A549 (cell line): ENCODE measurements at regions of chr10 and their contacts with region 1.

Region 1: GRCh38 chr10:87861953-87862678 is 1.2 kb downstream of the KLLN start:
- DNase-seq: peak; percentile 91 to 99
- ATAC-seq: peak; percentile 57 to 74
- H3K4me3 ChIP-seq: peak overlapping the region; percentile 78
- H3K27ac ChIP-seq: peak overlapping the region; percentile 96 to 99
- H3K4me1 ChIP-seq: peaks cover 5% of the 10 kb centered on the region; the same call in 1 of the 3 replicates
- CTCF ChIP-seq: no peak; the same call in 2 of the 3 replicates
- EP300 ChIP-seq: no peak
- POLR2A ChIP-seq: peak; percentile 65
- RAD21 ChIP-seq: peak in 1 of 2 experiments; percentile 26; a peak in 1 of 5 replicates

Region 2: DNA sequence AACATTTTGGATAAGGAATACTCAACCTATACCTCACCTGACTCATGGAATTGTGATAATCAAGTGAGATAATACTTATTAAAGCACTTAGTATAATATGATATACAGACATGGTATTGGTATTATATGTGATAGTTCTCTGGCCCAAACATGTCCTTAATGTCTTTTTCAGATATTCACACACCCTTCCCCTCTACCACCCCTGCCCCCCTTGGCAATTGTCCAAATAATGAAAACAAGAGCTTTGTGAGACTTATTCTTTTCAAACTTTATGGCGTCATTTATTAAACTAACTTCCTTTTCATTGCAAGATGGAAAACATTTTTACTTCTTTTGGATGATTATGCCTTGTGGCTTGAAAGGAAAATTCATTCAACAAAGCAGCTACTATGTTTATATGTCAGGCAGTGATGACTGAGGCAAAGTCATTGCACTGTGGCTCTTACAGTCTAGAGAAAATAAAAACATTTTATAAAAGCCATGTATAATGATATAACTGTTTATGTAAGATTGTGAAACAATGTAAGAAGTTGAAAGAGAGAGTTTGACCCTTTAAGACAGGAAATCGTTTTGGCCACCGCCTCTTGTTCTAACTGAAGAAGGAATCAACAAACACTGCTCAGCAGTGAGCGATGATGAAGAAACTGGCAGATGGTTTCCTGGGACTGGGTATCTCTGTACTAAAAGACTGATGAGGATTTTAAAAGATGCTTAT is 330.1 kb before region 1 on chr10:
- CTCF ChIA-PET with region 1: interaction called, 5 read pairs
- POLR2A ChIA-PET with region 1: interaction called, 16 read pairs
- DNase-seq: no peak
- ATAC-seq: no peak
- H3K4me3 ChIP-seq: no peak overlapping the region
- H3K27ac ChIP-seq: no peak overlapping the region
- H3K4me1 ChIP-seq: peaks cover 15% of the 10 kb centered on the region; the same call in 2 of the 3 replicates
- CTCF ChIP-seq: no peak
- EP300 ChIP-seq: no peak
- POLR2A ChIP-seq: no peak
- RAD21 ChIP-seq: no peak

Region 3: GRCh38 chr10:87842776-87843497 is 19.2 kb before region 1 on chr10:
- CTCF ChIA-PET with region 1: interaction called, 10 read pairs
- POLR2A ChIA-PET with region 1: interaction called, 34 read pairs
- DNase-seq: peak in 1 of 2 experiments; percentile 60
- ATAC-seq: no peak
- H3K4me3 ChIP-seq: no peak overlapping the region
- H3K27ac ChIP-seq: peak overlapping the region; percentile 73 to 78
- H3K4me1 ChIP-seq: peaks cover 63% of the 10 kb centered on the region
- CTCF ChIP-seq: no peak
- EP300 ChIP-seq: no peak
- POLR2A ChIP-seq: no peak
- RAD21 ChIP-seq: no peak

Region 4: DNA sequence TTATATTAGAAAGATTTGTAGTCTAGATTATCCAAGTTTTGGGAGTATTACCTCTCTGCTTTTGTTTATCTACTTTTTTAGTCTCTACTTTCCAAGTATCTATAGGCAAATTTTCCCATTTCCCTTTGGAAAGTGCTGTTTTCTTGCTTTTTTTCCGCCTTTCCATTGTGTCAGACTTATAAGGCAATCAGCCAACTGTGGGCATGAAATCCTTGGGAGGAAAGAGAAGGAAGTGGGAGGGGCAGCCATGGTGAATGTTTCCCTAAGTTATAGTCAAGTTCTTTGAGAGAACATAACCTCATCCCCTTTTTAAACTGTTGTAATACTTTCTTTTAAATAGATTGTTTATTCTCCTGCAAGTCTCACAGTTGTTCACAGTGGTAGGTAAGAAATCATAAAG is 53.9 kb after region 1 on chr10:
- CTCF ChIA-PET with region 1: no interaction called
- POLR2A ChIA-PET with region 1: no interaction called
- DNase-seq: no peak
- ATAC-seq: no peak
- H3K4me3 ChIP-seq: no peak overlapping the region
- H3K27ac ChIP-seq: no peak overlapping the region
- H3K4me1 ChIP-seq: peaks cover 17% of the 10 kb centered on the region
- CTCF ChIP-seq: no peak
- EP300 ChIP-seq: no peak
- POLR2A ChIP-seq: no peak
- RAD21 ChIP-seq: no peak

Region 5: DNA sequence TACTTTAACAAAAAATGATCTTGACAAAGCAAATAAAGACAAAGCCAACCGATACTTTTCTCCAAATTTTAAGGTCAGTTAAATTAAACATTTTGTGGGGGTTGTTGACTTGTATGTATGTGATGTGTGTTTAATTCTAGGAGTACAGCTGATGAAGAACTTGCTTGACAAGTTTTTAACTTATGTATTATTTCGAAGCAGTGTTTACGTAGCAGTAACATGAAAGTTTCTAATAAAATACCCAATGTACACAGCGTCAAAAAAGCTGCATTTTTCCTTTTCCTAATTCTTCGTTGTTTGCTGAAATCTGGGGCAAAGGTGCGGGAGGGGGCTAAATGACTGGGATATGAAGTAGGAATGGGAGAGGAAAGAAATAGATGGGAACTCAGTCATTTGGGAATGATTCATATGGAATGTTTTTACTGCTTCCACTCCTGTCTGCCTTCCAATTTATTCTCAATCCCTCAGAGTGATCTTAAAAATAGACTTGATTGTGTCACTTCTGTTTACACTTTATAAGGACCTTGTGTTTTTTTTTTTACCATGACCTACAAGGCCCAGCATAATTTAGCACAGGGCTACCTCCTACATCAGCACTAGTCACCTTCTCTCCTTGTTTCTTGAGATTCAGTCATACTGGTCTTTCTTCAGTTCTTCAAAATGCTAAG is 99.1 kb after region 1 on chr10:
- CTCF ChIA-PET with region 1: no interaction called
- POLR2A ChIA-PET with region 1: interaction called, 13 read pairs
- DNase-seq: peak in 1 of 2 experiments; percentile 60
- ATAC-seq: peak; percentile 70 to 86
- H3K4me3 ChIP-seq: peak overlapping the region; percentile 18; the same call in 1 of the 3 replicates
- H3K27ac ChIP-seq: peak overlapping the region; percentile 57 to 62
- H3K4me1 ChIP-seq: peaks cover 38% of the 10 kb centered on the region
- CTCF ChIP-seq: no peak
- EP300 ChIP-seq: peak in 1 of 2 experiments; percentile 14; a peak in 1 of 5 replicates
- POLR2A ChIP-seq: no peak
- RAD21 ChIP-seq: peak in 1 of 2 experiments; percentile 34; a peak in 3 of 5 replicates

Region 6: GRCh38 chr10:88386821-88387773 is 525.0 kb after region 1 on chr10:
- CTCF ChIA-PET with region 1: interaction called, 38 read pairs
- POLR2A ChIA-PET with region 1: interaction called, 83 read pairs
- DNase-seq: peak; percentile 33 to 73
- ATAC-seq: peak; percentile 35 to 79; a peak in 5 of 6 replicates
- H3K4me3 ChIP-seq: 0 out of 3 replicates have a peak overlapping the region, but pooled peaks have one; percentile 2
- H3K27ac ChIP-seq: peak overlapping the region; percentile 77 to 82
- H3K4me1 ChIP-seq: peaks cover 29% of the 10 kb centered on the region
- CTCF ChIP-seq: no peak
- EP300 ChIP-seq: no peak
- POLR2A ChIP-seq: no peak
- RAD21 ChIP-seq: no peak